ENCODE measurements at regions of chr7 and their contacts with region 1.

Region 1: GRCh38 chr7:131819891-131820290 is 263.5 kb upstream of the PODXL start:
- DNase-seq: no peak
- H3K4me3 ChIP-seq: no peak overlapping the region
- H3K27ac ChIP-seq: no peak overlapping the region
- H3K4me1 ChIP-seq: peaks cover 0 to 5% (median 1%) of the 10 kb centered on the region in 4 experiments; a peak in 2 of 7 replicates
- H3K27me3 ChIP-seq: no peaks in the 10 kb centered on the region
- CTCF ChIP-seq: no peak
- EP300 ChIP-seq: no peak
- POLR2A ChIP-seq: no peak
- RAD21 ChIP-seq: no peak

Region 2: GRCh38 chr7:131753620-131754222 is 66.2 kb before region 1 on chr7:
- CTCF ChIA-PET with region 1: no interaction called
- POLR2A ChIA-PET with region 1: no interaction called
- DNase-seq: peak; percentile 21 to 66
- H3K4me3 ChIP-seq: no peak overlapping the region
- H3K27ac ChIP-seq: no peak overlapping the region
- H3K4me1 ChIP-seq: no peaks in the 10 kb centered on the region
- H3K27me3 ChIP-seq: no peaks in the 10 kb centered on the region
- CTCF ChIP-seq: peak; percentile 65 to 79 (median 76)
- EP300 ChIP-seq: no peak
- POLR2A ChIP-seq: no peak
- RAD21 ChIP-seq: peak; percentile 64 to 67

Region 3: GRCh38 chr7:131786204-131786603 is 33.7 kb before region 1 on chr7:
- CTCF ChIA-PET with region 1: no interaction called
- POLR2A ChIA-PET with region 1: no interaction called
- DNase-seq: no peak
- H3K4me3 ChIP-seq: no peak overlapping the region
- H3K27ac ChIP-seq: no peak overlapping the region
- H3K4me1 ChIP-seq: no peaks in the 10 kb centered on the region
- H3K27me3 ChIP-seq: no peaks in the 10 kb centered on the region
- CTCF ChIP-seq: no peak
- EP300 ChIP-seq: no peak
- POLR2A ChIP-seq: no peak
- RAD21 ChIP-seq: no peak

Region 4: GRCh38 chr7:131836733-131837132 is 16.8 kb after region 1 on chr7:
- CTCF ChIA-PET with region 1: interaction called, 10 read pairs
- POLR2A ChIA-PET with region 1: no interaction called
- DNase-seq: peak in 1 of 2 experiments; percentile 29
- H3K4me3 ChIP-seq: no peak overlapping the region
- H3K27ac ChIP-seq: no peak overlapping the region
- H3K4me1 ChIP-seq: no peaks in the 10 kb centered on the region
- H3K27me3 ChIP-seq: no peaks in the 10 kb centered on the region
- CTCF ChIP-seq: peak; percentile 67 to 84 (median 75)
- EP300 ChIP-seq: no peak
- POLR2A ChIP-seq: no peak
- RAD21 ChIP-seq: peak; percentile 49 to 65; a peak in 3 of 4 replicates

Region 5: DNA sequence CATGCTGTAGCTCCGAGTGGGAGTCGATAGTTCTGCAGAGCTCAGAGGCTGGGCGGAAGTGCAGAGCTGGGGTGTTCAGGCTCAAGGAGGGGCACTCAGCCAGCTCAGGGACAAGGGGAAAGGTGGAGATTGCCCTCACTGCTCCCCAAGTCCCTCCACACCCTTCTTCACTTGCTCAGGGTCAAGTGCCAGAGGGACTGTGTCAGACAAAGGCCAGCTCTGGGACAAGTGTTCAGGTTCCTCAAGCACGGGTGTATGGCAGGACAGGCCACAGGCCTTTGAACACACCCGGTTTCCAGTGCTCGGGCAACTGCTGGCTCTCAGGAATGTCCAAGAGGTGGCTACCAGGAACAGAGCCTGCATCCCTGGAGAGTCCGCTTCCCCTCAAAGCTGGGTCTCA is 29.6 kb after region 1 on chr7:
- CTCF ChIA-PET with region 1: no interaction called
- POLR2A ChIA-PET with region 1: no interaction called
- DNase-seq: no peak
- H3K4me3 ChIP-seq: no peak overlapping the region
- H3K27ac ChIP-seq: no peak overlapping the region
- H3K4me1 ChIP-seq: no peaks in the 10 kb centered on the region
- H3K27me3 ChIP-seq: no peaks in the 10 kb centered on the region
- CTCF ChIP-seq: no peak
- EP300 ChIP-seq: no peak
- POLR2A ChIP-seq: no peak
- RAD21 ChIP-seq: no peak

Measured in H1 (cell line).